Right ventricle myocardium inferior (tissue), 1 donor: ENCODE measurements at regions of chr9 and their contacts with region 1.

Region 1: GRCh38 chr9:137067860-137068538 is 2.4 kb downstream of the SAPCD2 start:
- DNase-seq: peak; percentile 89
- ATAC-seq: peak; percentile 48

Region 2: DNA sequence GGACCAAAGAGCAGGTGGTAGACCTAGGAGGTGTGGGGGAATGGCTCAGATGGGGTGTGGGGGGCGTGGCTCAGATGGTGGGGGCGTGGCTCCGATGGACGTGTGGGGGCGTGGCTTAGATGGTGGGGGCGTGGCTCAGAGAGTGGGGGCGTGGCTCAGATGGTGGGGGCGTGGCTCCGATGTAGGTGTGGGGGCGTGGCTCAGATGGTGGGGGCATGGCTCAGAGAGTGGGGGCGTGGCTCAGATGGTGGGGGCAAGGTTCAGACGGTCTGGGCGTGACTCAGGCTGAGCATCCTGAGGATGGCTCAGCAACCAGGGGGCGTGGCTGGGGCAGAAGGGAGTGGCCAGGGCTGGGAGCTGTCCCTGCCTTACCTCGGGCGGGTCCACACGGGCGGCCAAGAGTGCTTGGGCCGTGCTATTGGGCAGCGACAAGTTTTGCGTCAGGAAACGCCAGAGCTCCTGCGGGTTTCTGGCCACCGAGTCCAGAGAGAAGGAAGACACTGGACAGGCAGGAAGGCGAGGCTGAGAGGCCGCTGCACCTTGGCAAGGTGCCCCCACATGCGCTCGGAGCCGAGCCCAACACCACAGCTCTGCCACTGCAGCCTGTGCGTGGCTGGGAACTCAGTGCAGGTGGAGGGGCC is 45.9 kb before region 1 on chr9:
- intact Hi-C with region 1: no loop called
- DNase-seq: no peak
- ATAC-seq: no peak

Region 3: DNA sequence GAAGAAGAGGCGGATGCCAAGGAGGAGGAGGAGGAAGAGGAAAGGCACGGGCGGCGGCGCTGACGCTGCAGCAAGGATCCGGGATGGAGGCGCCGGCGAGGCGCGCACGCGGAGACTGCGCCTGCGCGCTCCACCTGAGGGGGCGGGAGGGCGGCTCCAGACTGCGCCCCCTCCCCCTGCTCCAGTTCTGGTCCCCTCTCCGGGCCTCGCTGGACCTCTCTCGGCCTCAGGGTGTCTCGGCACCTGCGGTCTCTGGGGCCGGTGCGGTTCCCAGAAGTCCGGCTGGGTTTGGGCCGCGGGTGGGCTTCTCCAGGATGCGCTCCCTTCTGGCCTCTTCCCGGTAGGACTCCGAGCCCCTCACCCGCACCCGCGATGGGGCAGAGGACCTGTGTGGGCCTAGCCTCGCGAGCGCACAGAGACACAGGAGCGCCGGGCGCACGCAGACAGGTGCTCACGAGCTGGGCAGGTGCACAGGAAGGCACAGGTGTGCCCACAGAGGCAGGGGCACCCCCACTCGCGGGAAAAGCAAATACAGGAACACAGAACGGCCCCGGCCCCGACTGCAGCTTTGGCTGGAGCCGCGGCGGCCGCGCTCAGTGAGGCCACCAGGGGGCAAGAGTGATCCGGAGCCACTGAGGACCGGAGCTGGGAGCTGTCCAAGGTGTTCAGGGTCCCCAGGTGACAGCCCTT is 21.8 kb before region 1 on chr9 and contains the start of gene NPDC1:
- intact Hi-C with region 1: loop called (anchors 1 kb)
- DNase-seq: peak; percentile 88
- ATAC-seq: peak; percentile 68
- total RNA-seq, gene NPDC1: 69.0 TPM

Region 4: GRCh38 chr9:137127301-137128157 is 59.5 kb after region 1 on chr9:
- intact Hi-C with region 1: no loop called
- DNase-seq: peak; percentile 67
- ATAC-seq: no peak